ENCODE measurements at regions of chr15 and their contacts with region 1.

Region 1: DNA sequence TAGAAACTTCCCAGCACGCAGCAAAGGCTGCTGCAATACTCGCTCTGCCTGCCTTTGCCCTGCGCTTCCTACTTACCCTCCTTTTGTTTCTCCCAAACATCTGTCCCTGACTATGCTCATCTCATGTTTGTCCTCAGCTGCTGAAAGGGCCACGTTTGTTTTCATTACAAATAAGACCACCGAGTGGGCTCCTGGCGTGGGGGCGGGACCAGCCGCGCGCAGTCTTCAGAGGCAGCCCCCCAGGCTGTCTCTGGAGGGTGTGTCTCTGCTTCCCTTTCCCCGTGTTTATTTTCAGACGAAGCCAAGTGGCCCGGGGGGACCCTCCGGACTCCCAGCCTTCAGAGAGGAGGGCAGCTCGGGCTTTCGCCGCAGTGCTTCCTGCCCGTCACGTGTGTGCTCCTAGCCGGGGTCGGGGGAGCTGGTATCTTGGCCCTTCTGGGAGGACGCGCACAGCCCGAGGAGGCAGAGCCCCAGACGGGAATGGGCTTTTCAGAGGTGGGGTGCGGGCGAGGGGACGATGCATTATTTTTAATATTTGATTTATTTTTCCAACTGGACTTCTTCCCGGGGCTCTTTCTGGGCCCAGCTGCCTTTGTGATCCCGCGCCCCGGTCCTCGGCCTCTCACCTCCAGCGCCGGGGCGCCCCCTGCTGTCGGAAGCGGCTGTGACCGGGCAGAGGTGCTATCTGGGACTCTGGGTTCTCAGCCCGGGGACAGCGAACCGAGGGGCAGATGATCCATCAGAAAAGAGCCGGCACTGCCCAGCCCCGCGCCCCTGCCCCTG is 70.0 kb upstream of the CGNL1 start:
- DNase-seq: peak; percentile 97
- H3K4me3 Mint-ChIP-seq: peak overlapping the region; percentile 69
- H3K27ac Mint-ChIP-seq: no peak overlapping the region
- H3K4me1 Mint-ChIP-seq: peaks cover 8% of the 10 kb centered on the region
- H3K27me3 Mint-ChIP-seq: no peaks in the 10 kb centered on the region
- CTCF ChIP-seq: peak; percentile 97

Region 2: GRCh38 chr15:57146506-57147201 is 159.7 kb before region 1 on chr15:
- CTCF ChIA-PET with region 1: interaction called, 22 read pairs
- intact Hi-C with region 1: loop called (anchors 1 kb)
- DNase-seq: peak; percentile 31
- H3K4me3 Mint-ChIP-seq: no peak overlapping the region
- H3K27ac Mint-ChIP-seq: no peak overlapping the region
- H3K4me1 Mint-ChIP-seq: no peaks in the 10 kb centered on the region
- H3K27me3 Mint-ChIP-seq: no peaks in the 10 kb centered on the region
- CTCF ChIP-seq: peak; percentile 63

Region 3: GRCh38 chr15:57364282-57365007 is 58.1 kb after region 1 on chr15:
- CTCF ChIA-PET with region 1: no interaction called
- intact Hi-C with region 1: no loop called
- DNase-seq: no peak
- H3K4me3 Mint-ChIP-seq: no peak overlapping the region
- H3K27ac Mint-ChIP-seq: no peak overlapping the region
- H3K4me1 Mint-ChIP-seq: no peaks in the 10 kb centered on the region
- H3K27me3 Mint-ChIP-seq: no peaks in the 10 kb centered on the region
- CTCF ChIP-seq: no peak

Region 4: GRCh38 chr15:57406062-57406772 is 99.9 kb after region 1 on chr15:
- CTCF ChIA-PET with region 1: no interaction called
- intact Hi-C with region 1: no loop called
- DNase-seq: no peak
- H3K4me3 Mint-ChIP-seq: no peak overlapping the region
- H3K27ac Mint-ChIP-seq: no peak overlapping the region
- H3K4me1 Mint-ChIP-seq: no peaks in the 10 kb centered on the region
- H3K27me3 Mint-ChIP-seq: peaks cover 16% of the 10 kb centered on the region
- CTCF ChIP-seq: no peak

Region 5: GRCh38 chr15:57762302-57762701 is 455.9 kb after region 1 on chr15:
- CTCF ChIA-PET with region 1: no interaction called
- intact Hi-C with region 1: no loop called
- DNase-seq: peak; percentile 10
- H3K4me3 Mint-ChIP-seq: no peak overlapping the region
- H3K27ac Mint-ChIP-seq: no peak overlapping the region
- H3K4me1 Mint-ChIP-seq: no peaks in the 10 kb centered on the region
- H3K27me3 Mint-ChIP-seq: peaks cover 36% of the 10 kb centered on the region
- CTCF ChIP-seq: peak; percentile 20